Colonic mucosa (tissue), 4 donors: ENCODE measurements at regions of chr16 and their contacts with region 1.

Region 1: DNA sequence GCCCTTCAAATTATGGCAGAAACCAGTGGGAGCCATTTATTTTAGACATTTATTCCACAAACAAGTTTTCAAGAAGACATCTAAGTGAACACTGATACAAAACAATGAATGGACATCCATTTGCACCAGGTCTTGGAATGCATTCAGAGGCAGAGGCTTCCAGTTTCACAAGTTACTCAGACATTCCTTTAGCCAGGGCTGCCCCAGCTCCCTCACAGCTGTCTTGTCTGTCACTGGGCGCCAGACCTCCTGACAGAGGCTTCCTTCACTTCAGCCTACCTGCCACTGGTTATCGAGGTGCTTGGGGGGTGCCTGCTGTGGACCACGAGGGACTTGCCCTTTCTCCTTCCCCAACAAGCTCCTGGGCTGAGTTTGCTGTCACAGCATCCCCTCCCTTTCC is 19.2 kb downstream of the AQP8 start:
- DNase-seq: no peak
- H3K4me3 ChIP-seq: no peak overlapping the region
- H3K27ac ChIP-seq: no peak overlapping the region
- H3K4me1 ChIP-seq: no peaks in the 10 kb centered on the region
- H3K27me3 ChIP-seq: no peaks in the 10 kb centered on the region
- CTCF ChIP-seq: no peak

Region 2: GRCh38 chr16:25014500-25015147 is 221.4 kb before region 1 on chr16:
- intact Hi-C with region 1: no loop called
- DNase-seq: peak; percentile 63
- H3K4me3 ChIP-seq: peak overlapping the region; percentile 80
- H3K27ac ChIP-seq: peak overlapping the region; percentile 93
- H3K4me1 ChIP-seq: peaks cover 23% of the 10 kb centered on the region
- H3K27me3 ChIP-seq: no peaks in the 10 kb centered on the region
- CTCF ChIP-seq: no peak

Region 3: GRCh38 chr16:25707982-25708583 is 472.1 kb after region 1 on chr16:
- intact Hi-C with region 1: loop called (anchors 5 kb)
- DNase-seq: peak; percentile 22
- H3K4me3 ChIP-seq: no peak overlapping the region
- H3K27ac ChIP-seq: no peak overlapping the region
- H3K4me1 ChIP-seq: no peaks in the 10 kb centered on the region
- H3K27me3 ChIP-seq: no peaks in the 10 kb centered on the region
- CTCF ChIP-seq: peak; percentile 34